ENCODE measurements at regions of chr2 and their contacts with region 1.

Region 1: DNA sequence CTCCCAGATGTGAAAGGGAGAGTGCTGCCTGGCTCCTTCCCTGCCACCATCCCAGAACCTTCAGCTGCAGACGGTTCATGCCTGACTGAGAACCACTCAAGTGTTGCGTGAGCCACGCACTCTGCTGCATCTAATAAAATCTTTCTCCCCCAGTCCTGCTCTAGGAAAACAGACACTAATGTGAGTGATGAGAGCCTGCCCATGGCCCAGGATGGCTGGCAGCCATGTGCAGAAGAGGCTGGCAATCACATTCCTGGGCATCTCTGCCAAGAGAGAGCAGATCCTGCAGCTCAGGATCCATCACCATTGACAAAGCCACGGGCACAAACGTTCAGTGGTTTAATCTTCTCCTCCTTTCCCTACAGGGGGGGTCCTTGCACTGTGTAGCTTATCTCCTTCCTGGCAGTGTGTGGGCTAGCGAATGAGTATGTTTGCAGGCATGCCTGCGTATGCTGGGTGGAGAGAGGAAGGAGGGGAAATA is 477.5 kb downstream of the SLC4A3 start:
- DNase-seq: peak; percentile 64
- H3K4me3 ChIP-seq: no peak overlapping the region
- CTCF ChIP-seq: peak; percentile 69

Region 2: DNA sequence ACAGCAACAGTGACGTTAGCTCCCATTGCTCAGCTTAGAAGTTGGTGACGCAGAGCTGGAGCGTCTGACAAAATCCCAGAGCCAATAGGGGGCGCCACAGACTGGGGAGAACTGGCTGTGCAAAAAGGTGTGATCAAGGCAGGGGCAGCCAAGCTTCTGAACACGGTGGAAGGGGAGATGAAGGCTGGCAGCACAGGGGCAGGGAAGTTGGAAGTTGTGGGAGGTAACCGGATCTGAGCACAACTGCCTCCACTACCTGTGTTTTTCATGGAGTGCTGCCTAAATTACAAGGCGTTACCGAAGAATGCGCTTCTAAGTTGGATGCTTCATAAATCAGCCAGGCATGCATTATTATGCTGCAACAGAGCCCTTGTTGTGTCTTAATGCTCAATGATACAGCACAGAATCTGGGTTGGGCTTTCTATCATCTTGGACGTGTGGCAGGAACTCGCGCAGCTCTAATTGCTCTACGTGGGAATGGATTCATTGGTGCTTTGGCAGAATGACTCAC is 107.5 kb before region 1 on chr2:
- CTCF ChIA-PET with region 1: interaction called, 13 read pairs
- POLR2A ChIA-PET with region 1: no interaction called
- DNase-seq: no peak
- H3K4me3 ChIP-seq: no peak overlapping the region
- CTCF ChIP-seq: peak; percentile 48

Region 3: GRCh38 chr2:221573430-221574230 is 1468.7 kb after region 1 on chr2:
- CTCF ChIA-PET with region 1: interaction called, 29 read pairs
- POLR2A ChIA-PET with region 1: interaction called, 3 read pairs
- DNase-seq: no peak
- H3K4me3 ChIP-seq: peak overlapping the region; percentile 87
- CTCF ChIP-seq: peak; percentile 99